Activated CD4-positive, alpha-beta T cell treated with anti-CD3 and anti-CD28 coated beads for 36 hours (primary cell): ENCODE measurements at regions of chr7 and their contacts with region 1.

Region 1: GRCh38 chr7:158829342-158830210 is at the start of gene ESYT2:
- DNase-seq: peak; percentile 99
- ATAC-seq: peak; percentile 78
- H3K4me3 Mint-ChIP-seq: peak within 1 kb of the TSS; percentile 94
- H3K27ac Mint-ChIP-seq: peak within 1 kb of the TSS; percentile 85
- H3K4me1 Mint-ChIP-seq: peaks cover 34% of the 10 kb centered on the region
- H3K27me3 Mint-ChIP-seq: no peaks in the 10 kb centered on the region
- total RNA-seq, gene ESYT2: 68.5 to 73.7 TPM

Region 2: DNA sequence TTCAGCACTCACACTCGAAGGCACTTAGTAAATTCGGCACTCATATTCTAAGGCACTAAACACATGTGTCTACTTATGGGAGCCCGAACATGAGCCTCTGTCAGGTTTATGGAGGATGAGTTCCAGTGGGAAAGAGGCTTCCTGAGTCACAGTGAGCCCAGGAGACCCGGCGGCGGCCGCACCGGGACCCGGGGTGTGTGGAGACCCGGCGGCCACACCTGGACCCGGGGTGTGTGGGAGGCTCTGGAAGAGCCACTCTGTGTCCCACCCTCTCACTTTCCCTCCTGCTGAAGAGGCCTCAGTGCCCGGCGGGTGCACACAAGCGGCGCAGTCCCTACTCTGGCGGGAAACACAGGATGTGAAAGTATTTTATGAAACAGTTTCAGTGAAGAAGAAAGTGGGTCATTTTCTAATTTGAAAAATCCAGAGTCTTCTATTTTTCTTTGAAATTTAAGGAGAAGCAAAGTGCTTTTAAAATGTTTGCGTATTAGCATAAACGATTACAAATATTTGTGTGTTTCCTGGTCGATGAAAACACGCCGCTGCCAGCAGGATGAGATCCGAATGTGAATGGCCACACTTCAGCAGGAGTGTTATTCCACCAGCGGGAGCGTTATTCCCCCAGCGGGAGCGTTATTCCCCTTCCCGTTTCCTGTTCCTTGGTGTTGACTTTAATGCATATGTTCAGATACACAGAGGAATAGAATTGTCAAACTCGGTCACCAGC is 867.7 kb before region 1 on chr7:
- CTCF ChIA-PET with region 1: no interaction called
- POLR2A ChIA-PET with region 1: no interaction called
- intact Hi-C with region 1: no loop called
- DNase-seq: no peak
- ATAC-seq: no peak
- H3K4me3 Mint-ChIP-seq: no peak overlapping the region
- H3K27ac Mint-ChIP-seq: no peak overlapping the region
- H3K4me1 Mint-ChIP-seq: no peaks in the 10 kb centered on the region
- H3K27me3 Mint-ChIP-seq: peaks cover 7% of the 10 kb centered on the region

Region 3: GRCh38 chr7:158704704-158705468 is 124.7 kb before region 1 on chr7 and contains the start of gene NCAPG2:
- CTCF ChIA-PET with region 1: no interaction called
- POLR2A ChIA-PET with region 1: interaction called, 4 read pairs
- intact Hi-C with region 1: loop called (anchors 1 kb)
- DNase-seq: peak; percentile 99
- ATAC-seq: peak; percentile 98
- H3K4me3 Mint-ChIP-seq: peak within 1 kb of the TSS; percentile 85
- H3K27ac Mint-ChIP-seq: peak within 1 kb of the TSS; percentile 81
- H3K4me1 Mint-ChIP-seq: peaks cover 44% of the 10 kb centered on the region
- H3K27me3 Mint-ChIP-seq: no peaks in the 10 kb centered on the region
- total RNA-seq, gene NCAPG2: 85.4 to 127 TPM

Region 4: GRCh38 chr7:158809596-158809995 is 20.0 kb before region 1 on chr7:
- CTCF ChIA-PET with region 1: interaction called, 6 read pairs
- POLR2A ChIA-PET with region 1: interaction called, 6 read pairs
- intact Hi-C with region 1: loop called (anchors 1 to 2 kb)
- DNase-seq: peak; percentile 53
- ATAC-seq: peak; percentile 33
- H3K4me3 Mint-ChIP-seq: peak overlapping the region; percentile 40
- H3K27ac Mint-ChIP-seq: peak overlapping the region; percentile 96
- H3K4me1 Mint-ChIP-seq: peaks cover 67% of the 10 kb centered on the region
- H3K27me3 Mint-ChIP-seq: no peaks in the 10 kb centered on the region

Region 5: GRCh38 chr7:158847451-158847866 is 17.9 kb after region 1 on chr7:
- CTCF ChIA-PET with region 1: interaction called, 9 read pairs
- POLR2A ChIA-PET with region 1: interaction called, 10 read pairs
- intact Hi-C with region 1: loop called in 1 of 2 experiments (anchors 1 kb)
- DNase-seq: peak; percentile 39
- ATAC-seq: peak; percentile 81
- H3K4me3 Mint-ChIP-seq: peak overlapping the region; percentile 66
- H3K27ac Mint-ChIP-seq: peak overlapping the region; percentile 95
- H3K4me1 Mint-ChIP-seq: peaks cover 39% of the 10 kb centered on the region
- H3K27me3 Mint-ChIP-seq: no peaks in the 10 kb centered on the region

Region 6: GRCh38 chr7:158863611-158864506 is 34.3 kb after region 1 on chr7:
- CTCF ChIA-PET with region 1: interaction called, 4 read pairs
- POLR2A ChIA-PET with region 1: interaction called, 4 read pairs
- intact Hi-C with region 1: loop called in 1 of 2 experiments (anchors 1 kb)
- DNase-seq: peak; percentile 83
- ATAC-seq: peak; percentile 77
- H3K4me3 Mint-ChIP-seq: peak overlapping the region; percentile 78
- H3K27ac Mint-ChIP-seq: peak overlapping the region; percentile 92
- H3K4me1 Mint-ChIP-seq: peaks cover 41% of the 10 kb centered on the region
- H3K27me3 Mint-ChIP-seq: no peaks in the 10 kb centered on the region